ENCODE measurements at regions of chr7 and their contacts with region 1.

Region 1: GRCh38 chr7:136163340-136163801 is 186.2 kb upstream of the MTPN start:
- DNase-seq: no peak
- CTCF ChIP-seq: no peak

Region 2: GRCh38 chr7:136150311-136150710 is 13.1 kb before region 1 on chr7:
- CTCF ChIA-PET with region 1: interaction called, 13 read pairs
- POLR2A ChIA-PET with region 1: no interaction called
- DNase-seq: no peak
- CTCF ChIP-seq: no peak

Region 3: DNA sequence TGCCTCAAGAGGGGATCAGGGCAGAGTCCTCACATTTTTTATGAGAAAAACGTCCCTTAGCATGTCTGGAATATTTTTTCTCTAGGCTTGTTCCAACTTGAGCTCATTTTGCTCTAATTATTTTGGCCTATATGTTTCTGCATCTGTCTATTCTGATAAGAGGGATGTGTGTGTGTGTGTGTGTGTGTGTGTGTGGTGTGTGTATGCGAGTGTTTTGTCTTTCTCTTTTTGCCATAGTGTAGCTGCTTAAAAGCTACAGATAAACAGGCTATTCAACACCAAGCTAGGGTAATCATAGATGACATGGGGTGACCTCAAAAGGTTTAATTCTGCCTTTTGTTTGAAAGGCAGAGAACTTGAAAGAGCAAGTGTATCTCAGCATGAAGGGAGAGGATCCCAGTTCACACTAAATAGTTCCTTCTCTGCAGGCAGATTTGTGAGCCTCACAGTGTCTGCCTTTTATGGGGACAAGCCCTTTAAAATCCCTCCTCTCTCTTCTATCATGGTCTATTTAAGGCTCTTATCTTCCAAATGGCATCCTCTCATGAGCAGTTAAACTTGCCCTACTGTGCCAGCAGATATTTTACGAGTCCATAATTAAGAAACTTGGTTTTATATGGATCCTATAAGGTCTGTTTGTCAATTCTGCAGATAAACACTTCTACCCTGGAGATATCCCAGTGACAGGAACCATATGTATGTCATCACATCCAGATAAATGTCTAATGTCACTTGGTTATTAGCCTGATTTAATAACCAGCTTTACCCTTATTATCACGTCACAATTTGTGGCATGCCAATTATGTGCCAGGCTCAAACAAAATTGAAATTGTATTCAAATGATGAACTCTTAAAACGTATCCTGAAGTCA is 16.7 kb after region 1 on chr7:
- CTCF ChIA-PET with region 1: interaction called, 21 read pairs
- POLR2A ChIA-PET with region 1: interaction called, 4 read pairs
- DNase-seq: no peak
- CTCF ChIP-seq: no peak

Measured in GM10248 (cell line).